ENCODE measurements at regions of chr12 and their contacts with region 1.

Region 1: DNA sequence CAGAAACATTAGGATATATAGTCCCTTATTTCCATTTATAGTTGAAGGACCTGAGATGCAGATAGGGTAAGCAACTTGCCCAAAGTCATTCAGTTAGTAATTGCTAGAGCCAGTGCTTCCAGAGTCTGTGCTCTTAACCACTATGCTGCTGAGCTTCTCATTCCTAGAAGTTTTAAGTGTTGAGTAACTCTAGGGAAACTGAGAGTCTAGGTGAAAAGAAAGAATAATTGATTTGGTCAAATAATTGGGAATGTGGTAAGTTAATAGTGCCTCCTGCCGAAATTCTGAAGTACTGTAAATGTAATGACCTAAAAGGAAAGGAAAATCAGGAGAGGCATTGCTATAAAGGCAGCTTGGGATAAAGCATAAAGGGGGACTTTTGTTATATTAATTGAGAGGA is 14.1 kb downstream of the PYROXD1 start:
- DNase-seq: no peak
- H3K4me3 Mint-ChIP-seq: no peak overlapping the region
- H3K27ac Mint-ChIP-seq: no peak overlapping the region
- H3K4me1 Mint-ChIP-seq: peaks cover 44% of the 10 kb centered on the region
- H3K27me3 Mint-ChIP-seq: no peaks in the 10 kb centered on the region

Region 2: GRCh38 chr12:19800884-19801283 is 1650.6 kb before region 1 on chr12:
- intact Hi-C with region 1: loop called (anchors 10 kb)
- DNase-seq: no peak
- H3K4me3 Mint-ChIP-seq: no peak overlapping the region
- H3K27ac Mint-ChIP-seq: peak overlapping the region; percentile 83
- H3K4me1 Mint-ChIP-seq: peaks cover 21% of the 10 kb centered on the region
- H3K27me3 Mint-ChIP-seq: no peaks in the 10 kb centered on the region

Region 3: GRCh38 chr12:21476949-21477348 is 25.4 kb after region 1 on chr12:
- intact Hi-C with region 1: loop called (anchors 1 kb)
- DNase-seq: no peak
- H3K4me3 Mint-ChIP-seq: no peak overlapping the region
- H3K27ac Mint-ChIP-seq: peak overlapping the region; percentile 74
- H3K4me1 Mint-ChIP-seq: peaks cover 26% of the 10 kb centered on the region
- H3K27me3 Mint-ChIP-seq: no peaks in the 10 kb centered on the region

Region 4: GRCh38 chr12:21613931-21614330 is 162.4 kb after region 1 on chr12:
- intact Hi-C with region 1: loop called (anchors 1 kb)
- DNase-seq: no peak
- H3K4me3 Mint-ChIP-seq: no peak overlapping the region
- H3K27ac Mint-ChIP-seq: no peak overlapping the region
- H3K4me1 Mint-ChIP-seq: peaks cover 40% of the 10 kb centered on the region
- H3K27me3 Mint-ChIP-seq: no peaks in the 10 kb centered on the region

Region 5: DNA sequence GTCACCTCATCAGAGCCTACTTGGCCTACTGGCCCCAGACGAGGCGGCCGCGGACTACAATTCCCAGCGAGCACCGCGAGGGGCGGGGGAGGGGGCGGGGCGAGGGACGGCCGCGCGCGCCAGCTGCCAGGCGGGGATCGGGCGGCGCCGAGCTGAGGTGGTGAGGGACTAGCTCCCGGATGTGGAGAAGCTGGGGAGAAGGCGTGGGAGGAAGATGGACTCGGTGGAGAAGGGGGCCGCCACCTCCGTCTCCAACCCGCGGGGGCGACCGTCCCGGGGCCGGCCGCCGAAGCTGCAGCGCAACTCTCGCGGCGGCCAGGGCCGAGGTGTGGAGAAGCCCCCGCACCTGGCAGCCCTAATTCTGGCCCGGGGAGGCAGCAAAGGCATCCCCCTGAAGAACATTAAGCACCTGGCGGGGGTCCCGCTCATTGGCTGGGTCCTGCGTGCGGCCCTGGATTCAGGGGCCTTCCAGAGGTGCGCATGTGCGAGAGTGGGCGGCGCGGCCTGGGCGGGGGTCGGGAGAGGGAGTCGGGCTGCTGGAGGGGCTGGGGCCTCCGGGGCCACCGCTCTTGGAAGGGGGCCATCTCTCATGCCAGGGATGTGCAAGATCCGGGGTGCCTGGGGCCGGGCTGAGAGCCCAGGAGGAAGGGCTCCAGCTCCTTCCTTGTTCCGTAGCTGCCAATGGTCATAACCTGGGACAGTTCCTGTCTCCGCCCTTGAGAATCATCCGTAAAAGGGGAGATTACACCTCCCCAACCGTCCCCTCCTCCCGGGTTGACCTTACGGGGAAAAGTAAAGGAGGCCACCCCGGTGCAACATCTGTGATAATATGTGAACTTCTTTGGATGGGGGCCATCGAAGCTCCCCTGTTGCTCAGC is 594.8 kb after region 1 on chr12 and contains the start of gene CMAS:
- intact Hi-C with region 1: loop called (anchors 10 kb)
- DNase-seq: peak; percentile 64
- H3K4me3 Mint-ChIP-seq: peak within 1 kb of the TSS; percentile 95
- H3K27ac Mint-ChIP-seq: peak within 1 kb of the TSS; percentile 87
- H3K4me1 Mint-ChIP-seq: peaks cover 45% of the 10 kb centered on the region
- H3K27me3 Mint-ChIP-seq: no peaks in the 10 kb centered on the region
- total RNA-seq, gene CMAS: 36.2 and 37.7 TPM in 2 replicates

Measured in activated T-helper 2 cell treated with anti-CD3 and anti-CD28 coated beads, Interferon-gamma antibody, Interleukin-2, Interleukin-4, amounts not matched to agents 10 μg/mL and 5 μg/mL and 100 μg/mL, durations not matched to agents 14 hours and 24 hours and 36 hours (primary cell).